Cardiac septum (tissue), 1 donor: ENCODE measurements at regions of chr5 and their contacts with region 1.

Region 1: GRCh38 chr5:58019614-58020013 is 440.3 kb downstream of the PLK2 start:
- DNase-seq: peak; percentile 83

Region 2: DNA sequence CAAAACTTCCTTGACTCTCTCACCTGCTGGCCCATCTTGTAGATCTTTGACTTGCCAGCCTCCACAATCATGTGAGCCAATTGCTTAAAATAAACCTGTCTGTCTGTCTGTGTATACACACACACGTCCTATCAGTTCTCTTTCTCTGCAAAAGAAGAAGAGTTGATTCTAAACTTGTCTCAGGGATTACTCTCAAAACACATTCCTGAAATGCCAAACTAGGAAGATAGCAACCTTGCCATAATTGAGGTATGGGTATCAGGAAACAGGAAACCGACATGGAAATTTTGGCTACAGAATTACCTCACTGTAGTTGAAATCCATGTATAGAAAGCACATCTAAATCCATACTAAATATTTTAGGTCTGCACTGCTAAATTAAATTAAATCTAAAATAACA is 43.1 kb before region 1 on chr5:
- intact Hi-C with region 1: no loop called
- DNase-seq: no peak

Region 3: DNA sequence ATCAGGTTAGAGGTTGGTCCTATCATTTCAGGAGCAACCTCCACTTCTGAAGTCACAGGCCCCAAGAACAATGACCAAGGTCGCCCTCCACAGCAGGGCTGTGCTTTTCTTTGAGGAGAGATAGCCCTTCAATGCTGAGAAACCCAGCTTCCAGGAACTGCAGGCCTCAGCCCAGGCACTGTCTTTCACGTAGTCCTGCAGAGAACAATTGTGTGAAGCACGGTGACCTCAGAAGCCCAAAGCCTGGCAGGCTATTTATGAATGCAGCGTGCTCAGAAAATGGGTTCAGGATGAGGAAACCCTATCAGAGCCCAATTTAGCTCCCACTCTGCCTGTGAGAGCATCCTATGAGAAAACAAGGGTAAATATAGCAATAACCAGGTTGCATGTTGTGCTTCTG is 52.0 kb after region 1 on chr5:
- intact Hi-C with region 1: loop called (anchors 5 kb)
- DNase-seq: peak; percentile 88

Region 4: DNA sequence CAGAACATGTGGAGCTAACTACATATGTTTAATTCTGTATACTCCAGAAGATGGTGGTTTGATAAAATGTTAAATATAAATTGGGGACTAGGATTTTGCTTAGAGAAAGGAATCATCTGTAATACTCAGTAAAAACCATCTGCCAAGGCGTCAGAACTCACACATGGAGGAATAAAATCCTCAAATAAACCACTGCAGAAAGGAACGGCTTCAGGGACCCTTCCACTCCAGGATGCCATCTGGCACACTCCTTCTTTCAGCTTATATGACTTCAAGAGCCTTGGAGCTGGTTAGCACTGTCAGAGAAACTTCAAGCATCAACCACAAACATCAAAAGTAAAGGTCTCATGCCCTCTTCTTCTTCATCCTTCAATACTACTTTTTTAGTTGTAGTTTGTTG is 79.6 kb after region 1 on chr5:
- intact Hi-C with region 1: no loop called
- DNase-seq: no peak